Activated T-helper 1 cell treated with anti-CD3 and anti-CD28 coated beads, Interleukin-12 subunit alpha, Interleukin-12 subunit beta, Interleukin-2, Interleukin-4 antibody, amounts not matched to agents 30 ng/mL and 10 ng/mL and 1 ng/mL, durations not matched to agents 14 hours and 24 hours and 36 hours (primary cell): ENCODE measurements at regions of chr11 and their contacts with region 1.

Region 1: GRCh38 chr11:111601979-111602864 is at the start of gene SIK2:
- DNase-seq: peak; percentile 84
- H3K4me3 Mint-ChIP-seq: peak within 1 kb of the TSS; percentile 97
- H3K27ac Mint-ChIP-seq: peak within 1 kb of the TSS; percentile 93
- H3K4me1 Mint-ChIP-seq: peaks cover 44% of the 10 kb centered on the region
- H3K27me3 Mint-ChIP-seq: no peaks in the 10 kb centered on the region
- total RNA-seq, gene SIK2: 8.4 and 10.0 TPM in 2 replicates

Region 2: GRCh38 chr11:111128076-111128870 is 473.9 kb before region 1 on chr11:
- intact Hi-C with region 1: no loop called
- DNase-seq: no peak
- H3K4me3 Mint-ChIP-seq: no peak overlapping the region
- H3K27ac Mint-ChIP-seq: no peak overlapping the region
- H3K4me1 Mint-ChIP-seq: no peaks in the 10 kb centered on the region
- H3K27me3 Mint-ChIP-seq: no peaks in the 10 kb centered on the region

Region 3: GRCh38 chr11:111531687-111532364 is 70.4 kb before region 1 on chr11:
- intact Hi-C with region 1: loop called (anchors 5 kb)
- DNase-seq: peak; percentile 52
- H3K4me3 Mint-ChIP-seq: no peak overlapping the region
- H3K27ac Mint-ChIP-seq: peak overlapping the region; percentile 56
- H3K4me1 Mint-ChIP-seq: peaks cover 31% of the 10 kb centered on the region
- H3K27me3 Mint-ChIP-seq: peaks cover 14% of the 10 kb centered on the region

Region 4: GRCh38 chr11:111542606-111543275 is 59.5 kb before region 1 on chr11:
- intact Hi-C with region 1: no loop called
- DNase-seq: no peak
- H3K4me3 Mint-ChIP-seq: peak overlapping the region; percentile 77
- H3K27ac Mint-ChIP-seq: no peak overlapping the region
- H3K4me1 Mint-ChIP-seq: peaks cover 34% of the 10 kb centered on the region
- H3K27me3 Mint-ChIP-seq: peaks cover 38% of the 10 kb centered on the region

Region 5: DNA sequence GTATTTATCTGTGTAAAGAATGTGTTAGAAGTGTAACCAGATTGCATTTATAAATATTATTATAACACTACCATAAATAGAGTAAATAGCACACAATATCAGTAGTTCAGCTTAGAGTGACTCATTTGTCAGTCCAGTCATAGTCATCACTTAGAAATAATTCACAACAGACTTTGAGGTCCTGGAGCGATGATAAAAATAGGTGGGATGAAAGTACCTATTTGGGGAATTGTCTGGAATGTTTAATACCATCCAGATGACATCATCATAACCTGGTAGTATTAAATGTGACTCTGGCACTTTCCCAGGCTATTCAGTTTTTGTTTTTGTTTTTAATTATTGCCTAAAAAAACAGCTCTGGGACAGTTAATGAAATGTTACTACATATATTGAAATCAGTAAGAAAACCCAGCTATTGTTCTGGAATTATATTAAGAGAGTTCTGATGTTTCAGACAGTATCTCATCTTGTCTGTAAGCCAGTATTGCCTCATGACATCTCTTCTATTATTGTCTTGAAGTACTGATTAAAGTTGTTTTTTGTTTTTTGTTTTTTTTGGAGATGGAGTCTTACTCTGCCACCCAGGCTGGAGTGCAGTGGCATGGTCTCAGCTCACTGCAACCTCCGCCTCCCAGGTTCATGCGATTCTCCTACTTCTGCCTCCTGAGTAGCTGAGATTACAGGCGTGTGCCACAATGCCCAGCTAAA is 74.8 kb after region 1 on chr11:
- intact Hi-C with region 1: loop called (anchors 5 kb)
- DNase-seq: no peak
- H3K4me3 Mint-ChIP-seq: no peak overlapping the region
- H3K27ac Mint-ChIP-seq: no peak overlapping the region
- H3K4me1 Mint-ChIP-seq: peaks cover 7% of the 10 kb centered on the region
- H3K27me3 Mint-ChIP-seq: no peaks in the 10 kb centered on the region

Region 6: GRCh38 chr11:111841370-111842053 is 239.3 kb after region 1 on chr11:
- intact Hi-C with region 1: loop called (anchors 1 kb)
- DNase-seq: peak; percentile 70
- H3K4me3 Mint-ChIP-seq: no peak overlapping the region
- H3K27ac Mint-ChIP-seq: no peak overlapping the region
- H3K4me1 Mint-ChIP-seq: peaks cover 16% of the 10 kb centered on the region
- H3K27me3 Mint-ChIP-seq: no peaks in the 10 kb centered on the region

Region 7: DNA sequence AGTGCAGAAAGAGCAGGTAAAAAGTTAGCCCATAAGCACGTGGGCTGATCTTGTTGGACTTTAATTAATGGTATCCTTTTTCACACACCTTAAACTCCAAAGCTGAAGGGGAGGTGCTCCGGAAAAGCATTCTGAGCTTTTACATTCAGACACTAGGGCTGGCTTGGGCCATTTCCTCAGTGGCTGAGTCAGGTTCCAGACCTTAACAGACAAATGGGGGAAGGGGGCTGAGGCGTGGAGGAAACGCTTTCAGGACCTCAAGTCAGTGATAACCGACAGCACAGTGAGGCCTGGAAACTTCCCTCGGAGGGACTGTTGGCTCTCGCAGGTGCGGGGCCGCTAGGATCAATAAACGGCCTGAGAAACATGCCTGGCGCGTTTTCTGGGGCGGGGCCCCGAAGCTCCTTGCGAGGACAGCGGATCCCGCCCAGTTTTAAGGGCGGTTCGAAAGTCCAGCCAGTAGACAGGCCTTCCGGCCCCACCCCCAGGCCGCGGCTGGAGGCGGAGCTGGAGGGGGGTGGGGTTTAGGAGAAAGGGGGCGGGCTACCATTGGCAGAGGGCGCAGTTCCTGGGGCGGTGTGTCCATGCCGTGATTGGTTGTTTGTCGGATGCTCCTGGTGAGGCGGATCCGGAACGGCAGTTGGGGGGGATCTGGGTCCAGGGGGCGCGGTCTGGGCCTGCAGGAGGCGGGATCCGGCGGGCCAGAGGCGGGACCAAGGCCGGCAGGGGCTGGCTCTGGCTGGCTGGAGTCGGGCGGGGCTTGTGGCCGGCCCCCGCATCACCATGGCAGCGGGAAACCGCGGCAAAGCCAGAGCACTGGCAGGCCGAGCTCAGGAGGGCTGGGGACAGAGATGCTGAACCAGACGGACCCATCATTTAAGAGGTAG is 324.5 kb after region 1 on chr11:
- intact Hi-C with region 1: loop called (anchors 1 kb)
- DNase-seq: peak; percentile 93
- H3K4me3 Mint-ChIP-seq: peak overlapping the region; percentile 82
- H3K27ac Mint-ChIP-seq: peak overlapping the region; percentile 89
- H3K4me1 Mint-ChIP-seq: peaks cover 17% of the 10 kb centered on the region
- H3K27me3 Mint-ChIP-seq: peaks cover 18% of the 10 kb centered on the region